ENCODE measurements at regions of chr7 and their contacts with region 1.

Region 1: DNA sequence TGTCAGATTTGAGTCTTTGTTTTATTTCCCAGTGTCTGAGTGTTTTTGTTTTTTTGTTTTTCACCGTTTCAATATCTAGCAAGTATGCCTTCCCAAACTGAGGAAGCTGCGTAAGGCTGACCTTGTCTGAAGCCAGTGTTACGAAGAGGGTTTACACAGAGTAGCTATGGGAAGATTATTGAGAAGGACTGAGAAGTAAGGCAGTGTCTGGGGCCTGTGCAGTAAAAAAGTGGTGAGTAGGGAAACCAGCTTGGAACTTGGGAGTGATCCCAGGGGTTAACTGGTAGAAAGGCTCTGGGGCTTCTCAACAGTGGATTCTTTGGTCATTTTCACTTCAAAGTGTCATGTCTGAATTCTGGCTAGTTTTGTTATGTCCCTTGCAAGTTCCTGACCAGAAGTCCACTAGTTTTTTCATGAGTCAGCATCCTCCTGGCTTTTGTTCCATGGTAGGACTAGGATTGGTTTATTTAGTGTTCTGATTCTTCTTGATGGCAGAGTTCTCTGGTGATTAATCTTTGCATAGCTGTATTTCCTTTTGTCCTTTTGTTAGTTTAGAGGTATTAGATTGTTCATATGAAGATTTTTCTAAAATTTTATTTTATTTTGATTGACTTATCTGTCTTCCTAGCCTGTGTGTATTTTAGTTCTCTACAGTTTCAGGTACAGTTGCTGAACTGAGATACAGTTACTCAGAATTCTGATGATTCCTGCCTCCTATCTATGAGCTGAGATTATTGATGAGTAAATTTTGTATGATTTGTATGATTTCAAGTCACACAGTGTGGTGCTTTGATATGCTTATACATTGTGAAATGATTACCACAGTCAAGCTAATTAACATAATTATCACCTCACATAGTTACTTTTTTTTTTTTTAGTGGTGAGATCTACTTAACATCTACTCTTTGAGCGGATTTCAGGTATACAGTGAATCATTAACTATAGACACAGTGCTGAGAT is 19.0 kb downstream of the GARS1 start:
- DNase-seq: no peak
- H3K4me3 ChIP-seq: no peak overlapping the region
- H3K27me3 ChIP-seq: no peaks in the 10 kb centered on the region
- CTCF ChIP-seq: no peak

Region 2: GRCh38 chr7:30510124-30511075 is 103.2 kb before region 1 on chr7:
- CTCF ChIA-PET with region 1: no interaction called
- POLR2A ChIA-PET with region 1: no interaction called
- DNase-seq: no peak
- H3K4me3 ChIP-seq: no peak overlapping the region
- H3K27me3 ChIP-seq: no peaks in the 10 kb centered on the region
- CTCF ChIP-seq: peak; percentile 84

Region 3: GRCh38 chr7:30625283-30625682 is 11.6 kb after region 1 on chr7:
- CTCF ChIA-PET with region 1: interaction called, 4 read pairs
- POLR2A ChIA-PET with region 1: interaction called, 16 read pairs
- DNase-seq: no peak
- H3K4me3 ChIP-seq: no peak overlapping the region
- H3K27me3 ChIP-seq: no peaks in the 10 kb centered on the region
- CTCF ChIP-seq: no peak

Measured in BJ (cell line).